Activated CD4-positive, alpha-beta memory T cell treated with anti-CD3 and anti-CD28 coated beads for 36 hours (primary cell): ENCODE measurements at regions of chr3 and their contacts with region 1.

Region 1: GRCh38 chr3:177589911-177590381 is 392.7 kb upstream of the TBL1XR1 start:
- DNase-seq: no peak
- H3K4me3 Mint-ChIP-seq: no peak overlapping the region
- H3K27ac Mint-ChIP-seq: no peak overlapping the region
- H3K4me1 Mint-ChIP-seq: peaks cover 38% of the 10 kb centered on the region
- H3K27me3 Mint-ChIP-seq: no peaks in the 10 kb centered on the region

Region 2: GRCh38 chr3:177538750-177539730 is 50.9 kb before region 1 on chr3:
- CTCF ChIA-PET with region 1: no interaction called
- POLR2A ChIA-PET with region 1: no interaction called
- intact Hi-C with region 1: loop called (anchors 5 kb)
- DNase-seq: no peak
- H3K4me3 Mint-ChIP-seq: peak overlapping the region; percentile 42
- H3K27ac Mint-ChIP-seq: peak overlapping the region; percentile 67
- H3K4me1 Mint-ChIP-seq: peaks cover 40% of the 10 kb centered on the region
- H3K27me3 Mint-ChIP-seq: no peaks in the 10 kb centered on the region

Region 3: GRCh38 chr3:177603148-177603603 is 13.2 kb after region 1 on chr3:
- CTCF ChIA-PET with region 1: interaction called, 5 read pairs
- POLR2A ChIA-PET with region 1: no interaction called
- intact Hi-C with region 1: loop called (anchors 1 kb)
- DNase-seq: no peak
- H3K4me3 Mint-ChIP-seq: no peak overlapping the region
- H3K27ac Mint-ChIP-seq: no peak overlapping the region
- H3K4me1 Mint-ChIP-seq: peaks cover 54% of the 10 kb centered on the region
- H3K27me3 Mint-ChIP-seq: no peaks in the 10 kb centered on the region

Region 4: GRCh38 chr3:177810162-177810623 is 220.2 kb after region 1 on chr3:
- CTCF ChIA-PET with region 1: no interaction called
- POLR2A ChIA-PET with region 1: no interaction called
- intact Hi-C with region 1: no loop called
- DNase-seq: no peak
- H3K4me3 Mint-ChIP-seq: no peak overlapping the region
- H3K27ac Mint-ChIP-seq: no peak overlapping the region
- H3K4me1 Mint-ChIP-seq: peaks cover 11% of the 10 kb centered on the region
- H3K27me3 Mint-ChIP-seq: no peaks in the 10 kb centered on the region